Activated CD4-positive, alpha-beta memory T cell treated with anti-CD3 and anti-CD28 coated beads for 36 hours (primary cell): ENCODE measurements at regions of chr11 and their contacts with region 1.

Region 1: GRCh38 chr11:110453684-110454354 is 24.1 kb downstream of the FDX1 start:
- DNase-seq: no peak
- H3K4me3 Mint-ChIP-seq: no peak overlapping the region
- H3K27ac Mint-ChIP-seq: no peak overlapping the region
- H3K4me1 Mint-ChIP-seq: peaks cover 34% of the 10 kb centered on the region
- H3K27me3 Mint-ChIP-seq: no peaks in the 10 kb centered on the region

Region 2: GRCh38 chr11:110435780-110436717 is 17.8 kb before region 1 on chr11:
- CTCF ChIA-PET with region 1: interaction called, 9 read pairs
- POLR2A ChIA-PET with region 1: interaction called, 4 read pairs
- intact Hi-C with region 1: loop called (anchors 2 kb)
- DNase-seq: no peak
- H3K4me3 Mint-ChIP-seq: no peak overlapping the region
- H3K27ac Mint-ChIP-seq: no peak overlapping the region
- H3K4me1 Mint-ChIP-seq: peaks cover 51% of the 10 kb centered on the region
- H3K27me3 Mint-ChIP-seq: no peaks in the 10 kb centered on the region

Region 3: GRCh38 chr11:110497231-110497978 is 43.6 kb after region 1 on chr11:
- CTCF ChIA-PET with region 1: no interaction called
- POLR2A ChIA-PET with region 1: no interaction called
- intact Hi-C with region 1: no loop called
- DNase-seq: no peak
- H3K4me3 Mint-ChIP-seq: no peak overlapping the region
- H3K27ac Mint-ChIP-seq: no peak overlapping the region
- H3K4me1 Mint-ChIP-seq: no peaks in the 10 kb centered on the region
- H3K27me3 Mint-ChIP-seq: no peaks in the 10 kb centered on the region

Region 4: DNA sequence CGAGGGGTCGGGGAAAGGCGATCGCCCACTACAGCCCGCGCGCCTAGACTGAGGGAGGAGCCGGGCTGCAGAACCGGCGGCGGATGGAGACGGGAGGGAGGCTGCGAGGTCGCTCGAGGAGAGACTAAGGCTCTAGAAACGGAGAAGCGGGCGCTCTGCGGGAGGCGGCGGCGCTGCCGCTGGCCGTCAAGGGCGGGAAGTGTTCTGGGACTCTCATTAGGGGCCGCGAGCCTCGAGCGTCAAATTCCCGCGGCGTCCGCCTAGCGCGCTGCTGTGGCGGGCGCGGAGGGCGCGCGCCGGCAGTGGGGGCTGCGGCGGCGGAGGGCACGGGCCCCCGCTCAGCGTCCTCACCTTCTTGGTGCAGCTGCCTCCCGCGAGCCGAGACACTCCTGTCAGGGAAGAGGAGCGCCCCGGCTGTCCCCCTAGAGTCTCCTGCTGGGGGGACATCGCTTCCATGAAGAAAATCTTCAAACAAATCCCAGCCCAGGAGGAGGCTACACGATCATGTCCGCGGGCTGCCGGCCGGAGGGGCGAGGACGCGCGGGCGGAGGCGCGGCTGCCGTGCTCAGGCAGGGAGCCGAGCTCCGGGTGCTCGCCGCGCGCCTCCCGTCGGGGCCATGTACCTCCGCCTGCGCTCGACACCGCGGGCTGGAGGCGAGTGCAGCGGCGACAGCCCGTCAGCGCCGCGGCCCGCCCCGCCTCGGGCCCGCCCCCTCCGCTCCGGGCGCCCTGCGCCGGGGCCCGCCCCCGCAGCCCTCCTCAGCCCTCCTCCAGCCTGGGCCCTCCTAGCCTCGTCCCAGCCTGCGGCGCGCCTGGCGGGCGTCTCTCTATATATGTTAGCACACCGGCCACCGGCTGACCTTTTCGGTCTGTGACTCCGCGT is 258.2 kb after region 1 on chr11 and contains the start of gene ARHGAP20:
- CTCF ChIA-PET with region 1: no interaction called
- POLR2A ChIA-PET with region 1: no interaction called
- intact Hi-C with region 1: loop called (anchors 10 kb)
- DNase-seq: peak; percentile 61
- H3K4me3 Mint-ChIP-seq: peak within 1 kb of the TSS; percentile 47
- H3K27ac Mint-ChIP-seq: no peak within 1 kb of the TSS
- H3K4me1 Mint-ChIP-seq: peaks cover 12% of the 10 kb centered on the region
- H3K27me3 Mint-ChIP-seq: peaks cover 48% of the 10 kb centered on the region
- total RNA-seq, gene ARHGAP20: 0.05 TPM in 1 of 2 experiments, not detected in the other

Region 5: DNA sequence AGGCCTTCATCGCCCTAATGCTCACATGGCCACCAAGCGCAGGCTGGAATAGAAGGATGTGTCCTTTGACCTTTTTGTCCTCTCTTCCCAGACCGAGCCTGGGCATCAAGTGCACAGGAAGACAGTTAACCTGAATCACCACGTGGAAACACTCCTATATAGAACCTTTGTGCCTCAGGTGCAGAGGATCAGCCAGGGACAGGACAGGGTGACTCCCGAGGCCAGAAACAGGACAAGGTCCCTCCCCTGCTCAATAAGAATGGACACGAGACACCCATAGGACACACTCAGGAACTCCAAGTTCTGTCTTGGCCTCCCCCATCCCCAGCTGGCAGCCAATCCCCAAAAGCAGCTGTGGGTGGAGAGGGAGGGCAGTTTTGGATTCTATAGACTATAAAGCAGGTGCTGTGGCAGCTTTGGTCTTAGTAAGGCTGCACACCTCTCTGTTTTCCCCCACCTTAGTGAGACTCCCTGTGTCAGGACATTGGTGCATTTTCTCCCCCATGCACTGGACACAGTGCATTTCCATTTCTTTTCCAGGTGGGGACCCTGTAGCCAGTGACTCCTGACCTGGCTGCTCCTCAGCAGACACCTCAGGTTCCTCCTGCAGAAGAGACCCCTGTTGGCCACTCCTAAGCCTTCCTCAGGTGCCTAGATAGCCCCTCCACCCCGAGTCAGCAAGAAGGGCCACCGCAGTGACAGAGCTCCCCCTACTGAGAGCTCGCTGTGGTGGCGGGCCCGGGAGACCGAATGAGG is 968.9 kb after region 1 on chr11:
- CTCF ChIA-PET with region 1: no interaction called
- POLR2A ChIA-PET with region 1: no interaction called
- intact Hi-C with region 1: loop called (anchors 10 kb)
- DNase-seq: peak; percentile 73
- H3K4me3 Mint-ChIP-seq: no peak overlapping the region
- H3K27ac Mint-ChIP-seq: no peak overlapping the region
- H3K4me1 Mint-ChIP-seq: peaks cover 4% of the 10 kb centered on the region
- H3K27me3 Mint-ChIP-seq: no peaks in the 10 kb centered on the region

Region 6: GRCh38 chr11:111531687-111532364 is 1078.0 kb after region 1 on chr11:
- CTCF ChIA-PET with region 1: no interaction called
- POLR2A ChIA-PET with region 1: no interaction called
- intact Hi-C with region 1: loop called (anchors 2 kb)
- DNase-seq: peak; percentile 85
- H3K4me3 Mint-ChIP-seq: no peak overlapping the region
- H3K27ac Mint-ChIP-seq: no peak overlapping the region
- H3K4me1 Mint-ChIP-seq: peaks cover 26% of the 10 kb centered on the region
- H3K27me3 Mint-ChIP-seq: peaks cover 25% of the 10 kb centered on the region